ENCODE measurements at regions of chr9 and their contacts with region 1.

Region 1: GRCh38 chr9:32442433-32442832 is 58.0 kb downstream of the ACO1 start:
- DNase-seq: no peak
- H3K4me3 ChIP-seq: no peak overlapping the region
- H3K27ac ChIP-seq: no peak overlapping the region
- H3K4me1 ChIP-seq: no peaks in the 10 kb centered on the region
- H3K27me3 ChIP-seq: no peaks in the 10 kb centered on the region
- CTCF ChIP-seq: no peak
- POLR2A ChIP-seq: no peak

Region 2: DNA sequence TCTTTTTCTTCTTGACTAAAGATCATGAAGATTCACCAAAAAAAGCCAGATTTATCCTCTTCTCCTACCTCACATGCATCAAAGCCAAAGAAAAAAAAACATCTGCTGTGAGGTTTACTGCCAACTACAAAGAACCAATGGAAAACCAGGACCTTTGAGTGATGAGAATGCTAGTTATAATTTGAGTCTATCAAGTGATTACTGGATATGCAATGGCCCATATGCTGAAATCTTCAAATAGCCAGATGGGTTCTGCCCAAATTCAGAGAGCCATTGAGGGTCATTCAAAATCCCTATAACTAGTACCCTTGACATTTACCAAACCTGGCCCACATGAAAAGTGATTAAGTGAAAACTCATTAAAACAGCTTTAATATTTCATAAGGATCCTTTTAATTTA is 136.4 kb before region 1 on chr9:
- CTCF ChIA-PET with region 1: no interaction called
- POLR2A ChIA-PET with region 1: no interaction called
- dilution Hi-C with region 1: no loop called
- intact Hi-C with region 1: no loop called
- DNase-seq: no peak
- H3K4me3 ChIP-seq: no peak overlapping the region
- H3K27ac ChIP-seq: no peak overlapping the region
- H3K4me1 ChIP-seq: no peaks in the 10 kb centered on the region
- H3K27me3 ChIP-seq: no peaks in the 10 kb centered on the region
- CTCF ChIP-seq: no peak
- POLR2A ChIP-seq: no peak

Region 3: GRCh38 chr9:32487981-32488380 is 45.5 kb after region 1 on chr9:
- CTCF ChIA-PET with region 1: no interaction called
- POLR2A ChIA-PET with region 1: no interaction called
- dilution Hi-C with region 1: no loop called
- intact Hi-C with region 1: loop called (anchors 2 kb)
- DNase-seq: no peak
- H3K4me3 ChIP-seq: no peak overlapping the region
- H3K27ac ChIP-seq: no peak overlapping the region
- H3K4me1 ChIP-seq: no peaks in the 10 kb centered on the region
- H3K27me3 ChIP-seq: no peaks in the 10 kb centered on the region
- CTCF ChIP-seq: no peak
- POLR2A ChIP-seq: no peak